A673 (cell line): ENCODE measurements at regions of chr10 and their contacts with region 1.

Region 1: DNA sequence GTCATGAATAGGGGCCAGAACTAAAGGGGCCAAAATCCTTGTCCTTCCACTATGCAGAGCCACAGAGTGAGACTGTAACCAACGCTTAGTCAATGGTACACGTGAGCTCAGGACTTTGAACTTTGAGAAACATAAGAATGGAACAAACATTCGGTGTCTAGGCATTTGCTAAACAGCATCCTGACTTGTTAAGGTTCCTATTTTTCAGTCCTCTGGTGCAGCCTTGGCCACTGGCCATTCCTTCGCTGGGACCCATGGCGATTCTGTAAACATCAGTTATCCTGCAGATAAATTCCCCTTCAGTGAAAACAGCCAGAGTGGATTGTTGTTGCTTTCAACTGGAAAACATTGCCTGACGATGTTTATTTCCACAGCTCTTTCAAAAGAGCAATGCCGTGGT is 266.8 kb downstream of the SORCS1 start:
- DNase-seq: no peak
- H3K4me3 ChIP-seq: no peak overlapping the region
- H3K27ac ChIP-seq: no peak overlapping the region
- H3K4me1 ChIP-seq: peaks cover 13% of the 10 kb centered on the region
- H3K27me3 ChIP-seq: no peaks in the 10 kb centered on the region
- CTCF ChIP-seq: no peak

Region 2: DNA sequence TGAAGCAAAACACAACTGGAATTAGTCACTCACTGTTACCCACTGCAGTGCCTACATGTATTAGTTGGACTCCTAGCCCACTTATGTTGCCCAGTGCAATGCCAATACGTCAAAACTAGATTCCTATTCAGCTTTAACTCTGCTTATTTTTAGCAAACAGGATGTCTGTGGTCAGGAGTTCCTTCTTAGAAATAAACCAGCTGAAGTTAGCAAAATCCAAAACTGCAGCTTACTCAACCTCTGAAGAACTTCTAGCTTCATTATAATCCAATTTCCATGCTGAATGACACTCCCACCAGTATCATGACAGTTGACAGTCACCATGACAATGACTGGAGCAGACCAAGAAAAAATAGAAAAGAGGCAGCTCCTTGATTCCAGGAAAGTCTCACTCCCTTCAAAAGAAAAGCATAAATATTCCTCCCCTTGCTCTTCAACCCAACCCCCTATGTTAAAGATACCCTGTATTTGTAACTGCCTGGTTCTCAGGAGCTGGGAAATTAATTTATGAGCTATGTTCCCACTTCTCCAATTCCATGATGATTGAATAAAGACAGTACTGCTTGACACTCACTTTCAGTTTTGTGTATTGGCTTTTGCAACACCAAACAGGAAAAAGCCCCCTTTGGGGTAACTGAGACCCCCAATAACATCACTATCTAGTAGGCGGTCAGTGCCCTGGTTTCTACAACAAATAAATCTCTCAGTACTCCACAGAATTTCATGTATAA is 60.6 kb before region 1 on chr10:
- CTCF ChIA-PET with region 1: no interaction called
- POLR2A ChIA-PET with region 1: no interaction called
- intact Hi-C with region 1: no loop called
- DNase-seq: peak; percentile 64
- H3K4me3 ChIP-seq: no peak overlapping the region
- H3K27ac ChIP-seq: no peak overlapping the region
- H3K4me1 ChIP-seq: peaks cover 4% of the 10 kb centered on the region
- H3K27me3 ChIP-seq: no peaks in the 10 kb centered on the region
- CTCF ChIP-seq: no peak

Region 3: DNA sequence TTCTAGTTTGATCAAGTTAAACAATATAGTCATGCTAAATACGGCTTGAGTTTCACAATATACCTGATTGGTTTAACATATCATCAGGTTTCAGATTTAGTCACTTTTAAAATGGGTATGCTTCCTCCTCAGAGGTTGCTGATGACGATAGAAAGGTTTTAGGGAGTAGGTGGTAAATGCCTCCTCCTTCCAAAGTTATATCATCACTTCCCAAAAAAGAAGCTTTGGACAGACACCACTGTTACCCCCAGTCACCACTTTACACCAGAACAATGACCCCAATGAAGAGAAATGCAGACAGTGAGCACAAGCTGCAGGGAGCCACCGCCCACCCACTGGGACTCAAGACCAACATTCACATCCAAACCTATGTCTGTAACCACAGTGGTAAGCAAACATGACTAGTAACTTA is 22.2 kb after region 1 on chr10:
- CTCF ChIA-PET with region 1: no interaction called
- POLR2A ChIA-PET with region 1: no interaction called
- intact Hi-C with region 1: no loop called
- DNase-seq: no peak
- H3K4me3 ChIP-seq: no peak overlapping the region
- H3K27ac ChIP-seq: no peak overlapping the region
- H3K4me1 ChIP-seq: peaks cover 7% of the 10 kb centered on the region
- H3K27me3 ChIP-seq: peaks cover 27% of the 10 kb centered on the region
- CTCF ChIP-seq: no peak

Region 4: GRCh38 chr10:107144490-107144889 is 246.8 kb after region 1 on chr10:
- CTCF ChIA-PET with region 1: no interaction called
- POLR2A ChIA-PET with region 1: interaction called, 19 read pairs
- intact Hi-C with region 1: no loop called
- DNase-seq: peak; percentile 30
- H3K4me3 ChIP-seq: no peak overlapping the region
- H3K27ac ChIP-seq: no peak overlapping the region
- H3K4me1 ChIP-seq: no peaks in the 10 kb centered on the region
- H3K27me3 ChIP-seq: no peaks in the 10 kb centered on the region
- CTCF ChIP-seq: peak; percentile 34